ENCODE measurements at regions of chr9 and their contacts with region 1.

Region 1: GRCh38 chr9:1050116-1050800 is at the start of gene DMRT2:
- DNase-seq: peak; percentile 59
- ATAC-seq: peak; percentile 73
- H3K4me3 Mint-ChIP-seq: peak within 1 kb of the TSS; percentile 10
- H3K27ac Mint-ChIP-seq: no peak within 1 kb of the TSS
- H3K4me1 Mint-ChIP-seq: peaks cover 53% of the 10 kb centered on the region
- H3K27me3 Mint-ChIP-seq: peaks cover 76% of the 10 kb centered on the region
- total RNA-seq, gene DMRT2: not detected

Region 2: GRCh38 chr9:503881-504852 is 546.1 kb before region 1 on chr9:
- CTCF ChIA-PET with region 1: no interaction called
- POLR2A ChIA-PET with region 1: no interaction called
- intact Hi-C with region 1: loop called in 1 of 2 experiments (anchors 5 kb)
- DNase-seq: peak; percentile 81
- ATAC-seq: peak; percentile 92
- H3K4me3 Mint-ChIP-seq: peak within 1 kb of the TSS; percentile 74
- H3K27ac Mint-ChIP-seq: peak within 1 kb of the TSS; percentile 63
- H3K4me1 Mint-ChIP-seq: peaks cover 8% of the 10 kb centered on the region
- H3K27me3 Mint-ChIP-seq: peaks cover 26% of the 10 kb centered on the region

Region 3: DNA sequence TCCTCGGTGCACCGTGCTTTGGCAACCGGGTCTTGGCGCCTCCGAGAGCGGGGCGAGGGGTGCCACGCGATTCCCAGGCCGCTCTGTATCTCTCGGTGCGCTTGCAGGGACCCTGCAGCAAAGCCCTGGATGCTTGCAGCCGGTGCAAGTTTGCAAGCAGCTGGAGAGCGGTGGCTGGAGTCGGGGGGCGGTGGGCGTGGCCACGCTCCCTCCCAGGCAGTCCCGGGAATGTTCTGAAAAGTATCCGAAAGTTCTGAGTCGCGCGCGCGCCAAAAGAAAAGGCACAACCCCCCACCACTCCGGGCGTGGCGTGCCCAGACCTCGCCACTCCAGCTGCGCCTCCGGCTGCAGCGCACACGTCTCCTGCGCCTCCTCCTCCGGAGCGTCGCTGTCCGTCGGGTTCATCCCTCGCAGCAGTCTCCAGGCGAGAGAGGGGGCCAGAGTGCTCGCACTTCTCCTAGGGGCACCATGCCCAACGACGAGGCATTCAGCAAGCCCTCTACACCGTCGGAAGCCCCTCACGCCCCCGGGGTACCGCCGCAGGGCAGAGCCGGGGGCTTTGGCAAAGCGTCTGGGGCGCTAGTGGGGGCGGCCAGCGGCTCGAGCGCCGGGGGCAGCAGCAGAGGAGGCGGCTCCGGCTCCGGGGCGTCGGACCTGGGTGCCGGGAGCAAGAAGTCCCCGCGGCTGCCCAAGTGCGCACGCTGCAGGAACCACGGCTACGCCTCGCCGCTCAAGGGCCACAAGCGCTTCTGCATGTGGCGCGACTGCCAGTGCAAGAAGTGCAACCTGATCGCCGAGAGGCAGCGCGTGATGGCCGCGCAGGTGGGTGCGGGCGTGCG is 208.7 kb before region 1 on chr9 and contains the start of gene DMRT1:
- CTCF ChIA-PET with region 1: no interaction called
- POLR2A ChIA-PET with region 1: no interaction called
- intact Hi-C with region 1: loop called in 1 of 2 experiments (anchors 2 kb)
- DNase-seq: peak; percentile 23
- ATAC-seq: no peak
- H3K4me3 Mint-ChIP-seq: no peak within 1 kb of the TSS
- H3K27ac Mint-ChIP-seq: no peak within 1 kb of the TSS
- H3K4me1 Mint-ChIP-seq: peaks cover 4% of the 10 kb centered on the region
- H3K27me3 Mint-ChIP-seq: peaks cover 50% of the 10 kb centered on the region
- total RNA-seq, gene DMRT1: not detected

Region 4: GRCh38 chr9:976258-976942 is 73.9 kb before region 1 on chr9 and contains the start of gene DMRT3:
- CTCF ChIA-PET with region 1: interaction called, 4 read pairs
- POLR2A ChIA-PET with region 1: no interaction called
- intact Hi-C with region 1: loop called (anchors 1 to 2 kb)
- DNase-seq: peak; percentile 32
- ATAC-seq: no peak
- H3K4me3 Mint-ChIP-seq: no peak within 1 kb of the TSS
- H3K27ac Mint-ChIP-seq: no peak within 1 kb of the TSS
- H3K4me1 Mint-ChIP-seq: peaks cover 7% of the 10 kb centered on the region
- H3K27me3 Mint-ChIP-seq: peaks cover 66% of the 10 kb centered on the region
- total RNA-seq, gene DMRT3: not detected

Region 5: DNA sequence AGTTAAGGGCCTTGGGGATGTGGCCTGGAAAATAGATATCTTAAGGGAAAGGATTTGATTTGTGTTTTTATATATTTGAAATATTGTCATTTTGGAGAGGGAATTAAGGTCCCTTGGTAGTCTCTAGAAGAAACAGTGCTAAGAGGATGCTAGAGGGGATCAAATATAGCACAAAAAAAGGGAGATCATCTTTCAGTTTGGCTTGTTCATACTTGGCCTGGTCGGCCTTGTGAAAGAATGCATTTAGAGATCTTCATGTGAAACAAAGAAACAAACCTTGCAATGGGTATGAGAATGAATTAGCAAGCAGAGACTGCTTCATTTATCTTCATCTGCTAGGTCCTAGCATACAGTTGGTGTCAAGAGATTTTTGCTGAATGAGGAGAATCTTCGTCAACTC is 14.9 kb after region 1 on chr9:
- CTCF ChIA-PET with region 1: no interaction called
- POLR2A ChIA-PET with region 1: no interaction called
- intact Hi-C with region 1: no loop called
- DNase-seq: no peak
- ATAC-seq: no peak
- H3K4me3 Mint-ChIP-seq: no peak overlapping the region
- H3K27ac Mint-ChIP-seq: no peak overlapping the region
- H3K4me1 Mint-ChIP-seq: no peaks in the 10 kb centered on the region
- H3K27me3 Mint-ChIP-seq: peaks cover 12% of the 10 kb centered on the region

Region 6: DNA sequence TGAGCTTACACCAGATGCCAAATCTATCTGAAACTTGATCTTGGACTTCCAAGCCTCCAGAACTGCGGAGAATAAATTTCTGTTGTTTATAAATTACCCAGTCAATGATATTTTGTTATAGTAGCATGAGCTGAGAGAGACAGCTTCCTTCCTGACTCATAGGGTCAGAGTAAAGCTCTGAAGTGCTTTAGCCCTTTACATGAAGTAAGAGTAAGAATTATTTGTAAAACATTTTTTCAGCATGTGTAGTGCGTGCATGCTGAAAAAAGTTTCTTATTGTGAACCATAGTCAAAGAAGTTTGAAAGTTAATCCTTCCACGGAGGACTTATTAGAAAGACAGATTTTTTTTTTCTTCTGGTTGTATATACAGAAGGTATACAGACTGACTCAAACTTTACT is 172.3 kb after region 1 on chr9:
- CTCF ChIA-PET with region 1: no interaction called
- POLR2A ChIA-PET with region 1: no interaction called
- intact Hi-C with region 1: no loop called
- DNase-seq: no peak
- ATAC-seq: no peak
- H3K4me3 Mint-ChIP-seq: no peak overlapping the region
- H3K27ac Mint-ChIP-seq: no peak overlapping the region
- H3K4me1 Mint-ChIP-seq: no peaks in the 10 kb centered on the region
- H3K27me3 Mint-ChIP-seq: peaks cover 5% of the 10 kb centered on the region